Activated naive CD4-positive, alpha-beta T cell treated with anti-CD3 and anti-CD28 coated beads for 36 hours (primary cell): ENCODE measurements at regions of chr5 and their contacts with region 1.

Region 1: DNA sequence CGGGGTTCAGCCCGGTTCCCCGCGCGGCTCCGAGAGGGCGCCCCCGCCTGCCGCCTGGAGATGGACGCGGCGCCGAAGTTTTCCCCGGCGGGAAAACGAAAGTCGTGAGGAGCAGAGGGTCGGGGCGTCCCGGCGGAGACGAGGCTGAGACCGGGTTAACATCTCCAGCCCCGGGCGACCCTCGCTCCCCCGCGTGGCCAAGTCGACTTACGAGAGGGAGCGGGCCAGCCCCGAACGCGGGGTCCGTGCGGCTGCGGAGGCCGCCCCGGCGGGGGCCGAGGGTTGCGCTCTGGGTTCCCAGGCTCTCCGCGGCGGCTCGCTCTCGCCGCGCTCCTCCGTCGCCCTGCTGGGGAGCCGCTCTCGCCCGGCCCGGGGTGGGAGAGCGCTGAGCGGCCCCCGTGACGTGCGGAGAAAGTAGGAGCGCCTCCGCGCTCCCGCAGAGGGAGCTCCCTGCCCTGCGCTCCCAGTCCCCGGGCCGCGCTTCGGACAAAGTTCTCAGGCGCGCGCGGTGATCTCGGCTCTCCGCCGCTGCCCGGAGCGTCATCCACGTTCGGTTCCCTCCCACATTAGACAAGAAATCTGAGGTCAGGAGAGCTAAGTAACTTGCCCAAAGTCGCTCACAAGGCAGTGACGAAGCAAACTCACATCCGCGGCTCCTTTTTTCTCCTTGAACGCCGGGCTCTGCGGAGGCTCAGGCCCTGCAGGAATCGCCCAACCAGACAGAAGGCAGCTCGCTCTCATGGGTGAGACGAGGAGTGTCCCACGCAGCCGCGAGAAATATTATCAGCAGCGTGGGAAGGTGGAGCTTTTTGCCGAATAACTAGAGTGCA is 1.2 kb upstream of the GCNT4 start:
- DNase-seq: peak; percentile 67
- H3K4me3 Mint-ChIP-seq: peak overlapping the region; percentile 86
- H3K27ac Mint-ChIP-seq: peak overlapping the region; percentile 92
- H3K4me1 Mint-ChIP-seq: peaks cover 73% of the 10 kb centered on the region
- H3K27me3 Mint-ChIP-seq: no peaks in the 10 kb centered on the region

Region 2: GRCh38 chr5:74833537-74834266 is 219.8 kb before region 1 on chr5:
- CTCF ChIA-PET with region 1: no interaction called
- intact Hi-C with region 1: no loop called
- DNase-seq: no peak
- H3K4me3 Mint-ChIP-seq: no peak overlapping the region
- H3K27ac Mint-ChIP-seq: no peak overlapping the region
- H3K4me1 Mint-ChIP-seq: peaks cover 6% of the 10 kb centered on the region
- H3K27me3 Mint-ChIP-seq: no peaks in the 10 kb centered on the region

Region 3: DNA sequence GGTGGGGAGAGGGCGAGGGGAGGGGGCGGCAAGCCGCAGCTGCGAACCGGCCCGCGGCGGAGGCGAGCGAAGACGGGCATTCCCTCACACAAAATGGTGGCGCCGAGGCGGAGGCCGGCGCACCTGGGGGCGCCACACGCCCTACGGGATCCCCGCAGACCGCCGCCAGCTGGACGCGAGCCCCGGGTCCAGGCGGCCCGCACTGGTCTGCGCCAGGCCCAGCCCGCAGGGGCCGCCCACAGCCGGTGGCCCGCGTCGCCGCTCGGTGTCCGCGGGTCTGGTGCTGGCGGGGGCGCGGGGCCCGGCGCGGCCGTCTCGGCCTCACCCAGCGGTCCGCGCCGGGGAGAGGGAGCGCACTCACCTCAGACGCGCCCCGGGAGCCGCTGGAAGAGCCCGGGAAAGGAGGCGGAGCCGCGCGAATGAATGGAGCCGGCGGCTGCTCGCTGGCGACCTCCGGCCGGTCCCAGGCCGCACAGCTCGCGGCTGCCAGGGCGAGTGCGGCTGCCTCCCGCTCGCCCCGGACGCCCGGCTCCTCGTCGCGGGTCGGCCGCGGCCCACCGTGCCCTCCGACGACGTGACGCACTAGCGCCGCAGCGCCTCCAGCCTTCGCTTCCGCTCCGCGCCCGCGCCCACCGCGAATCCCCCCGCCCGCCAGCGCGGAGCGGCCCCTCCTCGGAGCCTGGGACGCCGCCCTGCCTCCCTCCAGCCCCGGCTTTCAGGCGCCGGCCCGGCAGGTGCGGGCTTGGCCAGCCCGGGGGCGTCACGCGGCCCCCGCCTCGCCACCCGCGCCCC is 187.5 kb before region 1 on chr5 and contains the start of gene FAM169A:
- CTCF ChIA-PET with region 1: no interaction called
- intact Hi-C with region 1: loop called (anchors 5 kb)
- DNase-seq: peak; percentile 43
- H3K4me3 Mint-ChIP-seq: peak within 1 kb of the TSS; percentile 85
- H3K27ac Mint-ChIP-seq: peak within 1 kb of the TSS; percentile 83
- H3K4me1 Mint-ChIP-seq: peaks cover 28% of the 10 kb centered on the region
- H3K27me3 Mint-ChIP-seq: no peaks in the 10 kb centered on the region
- total RNA-seq, gene FAM169A: 9.3 to 10.7 TPM

Region 4: DNA sequence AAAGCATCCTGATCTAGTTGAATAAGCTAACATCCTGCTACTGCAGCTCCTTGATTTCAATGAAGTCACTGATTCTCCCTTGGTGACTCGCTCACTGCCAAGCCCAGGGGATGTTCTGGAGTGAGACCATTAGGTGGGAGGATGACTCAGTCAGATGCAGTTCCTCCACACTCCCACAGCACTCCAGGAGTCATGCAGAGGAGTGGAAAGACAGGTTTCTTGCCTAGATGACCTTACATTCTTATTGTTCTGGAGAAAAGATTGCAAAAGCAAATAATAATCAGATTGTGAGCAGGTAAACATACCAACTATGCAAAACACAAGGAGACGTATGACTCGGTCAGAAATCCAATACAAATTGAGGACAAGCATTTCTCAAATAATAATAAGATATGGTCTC is 16.4 kb before region 1 on chr5:
- CTCF ChIA-PET with region 1: interaction called, 15 read pairs
- intact Hi-C with region 1: no loop called
- DNase-seq: peak; percentile 62
- H3K4me3 Mint-ChIP-seq: no peak overlapping the region
- H3K27ac Mint-ChIP-seq: no peak overlapping the region
- H3K4me1 Mint-ChIP-seq: peaks cover 56% of the 10 kb centered on the region
- H3K27me3 Mint-ChIP-seq: no peaks in the 10 kb centered on the region

Region 5: GRCh38 chr5:75236322-75237316 is 183.1 kb after region 1 on chr5 and contains the start of gene ANKRD31:
- CTCF ChIA-PET with region 1: interaction called, 40 read pairs
- intact Hi-C with region 1: loop called (anchors 1 kb)
- DNase-seq: peak; percentile 88
- H3K4me3 Mint-ChIP-seq: peak within 1 kb of the TSS; percentile 95
- H3K27ac Mint-ChIP-seq: peak within 1 kb of the TSS; percentile 97
- H3K4me1 Mint-ChIP-seq: peaks cover 17% of the 10 kb centered on the region
- H3K27me3 Mint-ChIP-seq: no peaks in the 10 kb centered on the region
- total RNA-seq, gene ANKRD31: 0.35 to 0.36 TPM

Region 6: GRCh38 chr5:75566710-75567309 is 513.3 kb after region 1 on chr5:
- CTCF ChIA-PET with region 1: no interaction called
- intact Hi-C with region 1: loop called (anchors 5 kb)
- DNase-seq: peak; percentile 84
- H3K4me3 Mint-ChIP-seq: peak overlapping the region; percentile 48
- H3K27ac Mint-ChIP-seq: peak overlapping the region; percentile 95
- H3K4me1 Mint-ChIP-seq: peaks cover 55% of the 10 kb centered on the region
- H3K27me3 Mint-ChIP-seq: no peaks in the 10 kb centered on the region

Region 7: GRCh38 chr5:76402886-76403765 is 1349.6 kb after region 1 on chr5 and contains the start of gene IQGAP2:
- CTCF ChIA-PET with region 1: no interaction called
- intact Hi-C with region 1: loop called (anchors 10 kb)
- DNase-seq: peak; percentile 79
- H3K4me3 Mint-ChIP-seq: peak within 1 kb of the TSS; percentile 95
- H3K27ac Mint-ChIP-seq: peak within 1 kb of the TSS; percentile 98
- H3K4me1 Mint-ChIP-seq: peaks cover 44% of the 10 kb centered on the region
- H3K27me3 Mint-ChIP-seq: no peaks in the 10 kb centered on the region
- total RNA-seq, gene IQGAP2: 54.6 to 55.9 TPM